Upper lobe of right lung (tissue), 1 donor: ENCODE measurements at regions of chrX and their contacts with region 1.

Region 1: DNA sequence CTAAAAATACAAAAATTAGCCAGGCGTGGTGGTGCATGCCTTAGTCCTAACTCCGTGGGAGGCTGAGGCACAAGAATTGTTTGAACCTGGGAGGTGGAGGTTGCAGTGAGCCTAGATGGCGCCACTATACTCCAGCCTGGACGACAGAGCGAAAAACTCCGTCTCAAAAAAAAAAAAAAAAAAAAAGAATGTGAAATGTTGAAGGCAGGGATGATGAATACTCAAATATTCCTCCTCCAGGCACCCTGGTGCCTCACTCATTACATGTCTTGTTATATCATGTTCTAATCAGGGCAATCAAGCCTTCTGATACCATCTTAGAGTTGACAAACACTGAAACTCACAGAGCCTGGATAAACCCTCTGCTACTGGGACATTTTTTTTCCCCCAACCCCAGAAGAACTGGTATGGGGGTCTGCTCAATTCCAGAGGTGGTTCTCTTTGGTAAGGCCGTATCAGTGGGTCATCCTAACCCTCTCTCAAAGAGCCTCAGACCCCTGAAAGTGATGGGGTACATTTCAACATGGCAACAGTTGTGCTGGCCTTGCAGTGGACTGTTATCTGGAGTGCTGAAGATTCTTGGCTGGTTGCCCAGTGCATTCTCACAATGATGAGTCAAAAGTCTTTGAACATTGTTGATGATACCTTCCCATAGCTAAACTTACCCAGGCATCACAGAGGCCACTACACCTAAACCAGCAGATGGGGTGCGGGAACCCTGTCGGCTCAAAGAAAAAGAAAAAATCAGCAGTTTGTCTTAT is 2.4 kb upstream of the SH3KBP1 start:
- DNase-seq: no peak
- ATAC-seq: no peak
- H3K4me3 ChIP-seq: no peak overlapping the region
- H3K27ac ChIP-seq: no peak overlapping the region
- H3K4me1 ChIP-seq: no peaks in the 10 kb centered on the region
- H3K27me3 ChIP-seq: no peaks in the 10 kb centered on the region
- CTCF ChIP-seq: no peak

Region 2: DNA sequence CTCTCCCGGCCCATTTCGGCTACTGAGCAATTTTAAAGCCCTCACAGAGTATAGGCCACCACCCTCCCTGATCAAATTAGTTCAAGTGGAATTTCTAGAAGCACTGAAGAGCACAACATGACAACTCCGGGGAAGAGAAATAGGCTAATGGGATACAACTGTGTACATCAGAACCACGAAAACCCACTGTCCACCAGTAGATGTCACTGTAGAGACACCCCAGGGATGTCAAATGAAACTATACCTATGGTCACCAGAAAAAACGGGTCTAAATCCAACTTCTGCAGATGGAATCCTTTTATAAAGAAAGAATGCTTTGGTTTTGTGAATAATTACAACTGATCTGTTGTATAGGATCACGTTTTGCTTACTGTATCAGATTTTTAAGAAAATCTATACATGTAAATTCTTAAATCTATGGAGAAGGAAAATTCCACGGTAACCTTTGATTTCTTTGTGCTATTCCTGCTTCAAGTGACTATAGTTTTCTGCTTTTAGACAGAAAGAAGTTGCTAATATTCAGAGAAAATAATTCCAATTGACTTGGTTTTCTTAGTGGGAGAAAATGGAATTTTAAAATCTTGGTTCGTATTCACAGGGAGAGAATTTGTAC is 345.0 kb before region 1 on chrX:
- intact Hi-C with region 1: loop called (anchors 10 kb)
- DNase-seq: no peak
- ATAC-seq: peak; percentile 83
- H3K4me3 ChIP-seq: no peak overlapping the region
- H3K27ac ChIP-seq: no peak overlapping the region
- H3K4me1 ChIP-seq: no peaks in the 10 kb centered on the region
- H3K27me3 ChIP-seq: no peaks in the 10 kb centered on the region
- CTCF ChIP-seq: peak; percentile 61